Activated CD8-positive, alpha-beta T cell treated with anti-CD3 and anti-CD28 coated beads, Interleukin-2, amount 10 ng/mL, durations not matched to agents 7 days and 5 days (primary cell): ENCODE measurements at regions of chr7 and their contacts with region 1.

Region 1: GRCh38 chr7:45026984-45027773 is 27.2 kb downstream of the CCM2 start:
- DNase-seq: peak; percentile 56
- ATAC-seq: peak; percentile 57
- H3K4me3 Mint-ChIP-seq: peak overlapping the region; percentile 80
- H3K27ac Mint-ChIP-seq: peak overlapping the region; percentile 84
- H3K4me1 Mint-ChIP-seq: peaks cover 67% of the 10 kb centered on the region
- H3K27me3 Mint-ChIP-seq: no peaks in the 10 kb centered on the region

Region 2: DNA sequence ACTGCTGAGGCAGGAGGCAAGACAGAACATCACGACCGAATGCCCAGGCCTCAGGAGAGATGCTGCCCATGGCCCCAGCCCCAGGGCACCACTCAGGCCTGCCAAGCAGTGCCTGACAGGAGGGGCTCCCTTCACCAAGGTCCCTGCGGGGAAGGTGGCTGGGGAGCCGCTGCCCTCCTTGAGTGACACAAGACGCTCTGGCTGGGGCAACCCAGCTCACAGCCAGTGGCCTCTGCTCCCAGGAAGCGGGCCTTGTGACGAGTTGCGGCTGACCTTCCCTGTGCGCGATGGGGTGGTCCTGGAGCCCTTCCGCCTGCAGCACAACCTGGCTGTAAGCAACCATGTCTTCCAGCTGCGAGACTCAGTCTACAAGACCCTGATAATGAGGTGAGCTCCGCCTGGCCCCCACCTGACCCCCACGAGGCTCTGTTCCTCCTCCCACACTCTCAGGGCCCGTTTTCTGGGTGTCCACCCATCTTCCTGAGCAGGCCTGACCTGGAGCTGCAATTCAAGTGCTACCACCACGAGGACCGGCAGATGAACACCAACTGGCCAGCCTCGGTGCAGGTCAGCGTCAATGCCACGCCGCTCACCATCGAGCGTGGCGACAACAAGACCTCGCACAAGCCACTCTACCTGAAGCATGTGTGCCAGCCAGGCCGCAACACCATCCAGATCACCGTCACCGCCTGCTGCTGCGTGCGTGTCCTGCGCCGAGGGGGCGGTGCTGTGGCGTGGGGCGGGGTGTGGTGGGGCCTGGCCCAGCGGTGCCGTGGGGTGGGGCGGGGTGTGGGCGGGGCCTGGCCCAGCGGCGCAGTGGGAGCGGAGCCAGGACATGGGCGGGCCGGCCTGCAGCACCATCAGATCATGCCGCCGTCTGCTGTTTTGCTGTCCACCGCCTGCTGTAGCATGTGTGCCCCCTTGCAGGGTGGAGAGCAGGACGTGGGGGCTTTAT is 265.7 kb before region 1 on chr7:
- CTCF ChIA-PET with region 1: no interaction called
- POLR2A ChIA-PET with region 1: no interaction called
- DNase-seq: no peak
- ATAC-seq: no peak
- H3K4me3 Mint-ChIP-seq: no peak overlapping the region
- H3K27ac Mint-ChIP-seq: no peak overlapping the region
- H3K4me1 Mint-ChIP-seq: no peaks in the 10 kb centered on the region
- H3K27me3 Mint-ChIP-seq: no peaks in the 10 kb centered on the region

Region 3: GRCh38 chr7:44811086-44811485 is 216.1 kb before region 1 on chr7:
- CTCF ChIA-PET with region 1: no interaction called
- POLR2A ChIA-PET with region 1: no interaction called
- DNase-seq: no peak
- ATAC-seq: no peak
- H3K4me3 Mint-ChIP-seq: no peak overlapping the region
- H3K27ac Mint-ChIP-seq: no peak overlapping the region
- H3K4me1 Mint-ChIP-seq: no peaks in the 10 kb centered on the region
- H3K27me3 Mint-ChIP-seq: no peaks in the 10 kb centered on the region

Region 4: DNA sequence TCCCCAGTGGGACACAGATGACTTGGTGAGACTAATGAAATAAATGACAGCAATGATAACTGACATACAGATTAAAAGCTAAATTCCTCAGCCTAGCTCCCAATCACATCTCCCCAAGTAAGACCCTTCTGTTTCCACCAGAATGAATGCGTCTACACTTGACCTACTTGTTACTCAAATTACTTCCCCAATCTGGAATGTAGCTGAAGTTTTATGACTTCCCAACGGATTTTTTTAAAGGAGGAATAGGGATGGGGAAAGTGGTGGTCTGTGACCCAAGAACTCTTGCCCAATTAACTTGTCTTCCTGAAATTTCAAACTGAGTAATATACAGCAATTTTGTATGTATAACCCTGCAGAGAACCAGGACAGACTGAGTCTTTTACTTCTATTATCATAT is 188.4 kb before region 1 on chr7:
- CTCF ChIA-PET with region 1: no interaction called
- POLR2A ChIA-PET with region 1: no interaction called
- DNase-seq: no peak
- ATAC-seq: no peak
- H3K4me3 Mint-ChIP-seq: no peak overlapping the region
- H3K27ac Mint-ChIP-seq: no peak overlapping the region
- H3K4me1 Mint-ChIP-seq: peaks cover 32% of the 10 kb centered on the region
- H3K27me3 Mint-ChIP-seq: no peaks in the 10 kb centered on the region

Region 5: DNA sequence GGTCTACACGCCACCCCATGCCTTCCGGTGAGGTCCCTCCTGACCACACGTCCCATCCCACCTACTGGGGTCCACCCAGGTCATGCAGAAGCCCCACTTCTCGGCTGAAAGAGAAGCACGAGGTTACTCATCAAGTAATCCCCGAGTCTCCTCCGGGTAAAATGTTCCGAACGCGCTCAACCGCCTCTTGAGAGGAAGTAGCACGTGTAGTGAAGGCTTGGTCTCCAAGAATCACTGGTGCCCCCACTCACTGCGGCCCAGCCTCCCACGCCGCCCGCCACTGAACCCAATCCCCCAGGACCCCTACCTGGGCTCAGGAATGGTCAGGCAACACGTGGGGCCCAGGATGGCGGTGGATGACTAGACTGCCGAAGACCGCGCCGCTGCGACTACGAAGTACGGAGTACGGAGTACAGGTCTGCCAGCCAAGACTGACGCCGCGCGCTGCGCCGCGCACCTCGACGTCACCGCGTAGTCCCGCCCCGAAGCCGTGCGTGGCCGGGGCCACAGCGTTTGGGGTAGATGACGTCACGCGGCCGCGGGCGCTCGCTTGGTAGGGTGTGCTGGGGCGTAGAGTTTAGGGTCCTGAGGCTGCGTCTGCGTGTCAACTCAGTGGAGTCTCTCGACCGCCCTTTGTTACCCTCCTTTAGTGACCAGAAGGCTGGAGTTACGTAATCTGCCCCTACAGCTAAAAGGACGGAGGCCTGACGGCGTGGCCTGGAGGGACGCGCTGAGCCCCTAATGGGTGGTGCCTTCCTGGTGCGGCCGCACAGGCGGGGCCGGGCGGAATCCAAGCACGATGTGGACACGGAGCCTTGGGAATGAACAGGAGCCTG is 40.7 kb before region 1 on chr7:
- CTCF ChIA-PET with region 1: interaction called, 4 read pairs
- POLR2A ChIA-PET with region 1: interaction called, 15 read pairs
- DNase-seq: peak; percentile 97
- ATAC-seq: peak; percentile 96
- H3K4me3 Mint-ChIP-seq: peak overlapping the region; percentile 99
- H3K27ac Mint-ChIP-seq: peak overlapping the region; percentile 99
- H3K4me1 Mint-ChIP-seq: peaks cover 54% of the 10 kb centered on the region
- H3K27me3 Mint-ChIP-seq: no peaks in the 10 kb centered on the region

Region 6: GRCh38 chr7:45211066-45211465 is 183.9 kb after region 1 on chr7:
- CTCF ChIA-PET with region 1: no interaction called
- POLR2A ChIA-PET with region 1: no interaction called
- DNase-seq: no peak
- ATAC-seq: no peak
- H3K4me3 Mint-ChIP-seq: no peak overlapping the region
- H3K27ac Mint-ChIP-seq: no peak overlapping the region
- H3K4me1 Mint-ChIP-seq: no peaks in the 10 kb centered on the region
- H3K27me3 Mint-ChIP-seq: peaks cover 42% of the 10 kb centered on the region